ENCODE measurements at regions of chr20 and their contacts with region 1.

Region 1: DNA sequence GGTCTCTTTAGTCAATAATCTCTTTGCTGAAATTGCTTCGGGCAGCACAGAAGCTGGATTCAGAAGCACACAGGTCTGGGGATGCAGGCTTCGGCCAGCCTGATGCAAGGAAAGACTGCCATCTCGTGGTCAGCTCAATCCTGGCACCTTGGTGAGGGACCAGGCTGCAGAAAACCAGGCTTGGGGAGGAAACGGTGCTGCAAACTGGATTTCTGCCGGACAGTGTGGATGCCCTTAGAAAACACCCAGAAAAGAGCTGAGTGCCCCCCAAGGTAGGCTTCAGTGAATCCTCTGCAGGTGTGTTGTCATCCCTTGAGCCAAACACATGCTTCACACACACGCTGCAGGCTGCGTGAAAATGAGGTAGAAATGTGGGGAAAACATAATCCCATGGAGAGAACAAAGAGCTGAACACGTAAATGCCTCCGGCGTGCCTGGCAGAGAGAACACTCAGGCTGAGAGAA is 89.8 kb upstream of the PAX1 start:
- DNase-seq: peak; percentile 73
- H3K27ac ChIP-seq: no peak overlapping the region
- CTCF ChIP-seq: peak; percentile 91

Region 2: GRCh38 chr20:20860078-20860806 is 755.4 kb before region 1 on chr20:
- CTCF ChIA-PET with region 1: interaction called, 11 read pairs
- POLR2A ChIA-PET with region 1: no interaction called
- DNase-seq: peak; percentile 80
- H3K27ac ChIP-seq: no peak overlapping the region
- CTCF ChIP-seq: peak; percentile 95

Region 3: DNA sequence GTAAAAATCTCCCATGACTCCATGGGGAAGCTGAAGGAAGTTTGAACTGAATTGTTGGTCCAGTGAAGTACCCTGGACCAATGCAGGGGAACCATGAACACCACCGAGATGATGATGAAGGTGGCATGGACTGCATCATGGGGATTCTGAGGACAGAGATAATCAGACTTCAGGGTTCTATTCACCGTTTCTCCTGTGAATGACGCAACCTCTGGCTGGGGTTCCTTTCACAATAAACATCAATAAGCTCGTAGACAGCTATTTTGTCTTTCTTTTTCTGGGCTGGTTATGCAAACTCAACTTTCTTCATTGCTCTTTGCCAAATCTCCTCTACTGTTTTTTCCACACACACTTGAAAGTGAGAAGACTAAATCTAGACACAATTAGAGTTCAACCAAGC is 13.8 kb before region 1 on chr20:
- CTCF ChIA-PET with region 1: interaction called, 10 read pairs
- POLR2A ChIA-PET with region 1: no interaction called
- DNase-seq: no peak
- H3K27ac ChIP-seq: no peak overlapping the region
- CTCF ChIP-seq: no peak